ENCODE measurements at regions of chr9 and their contacts with region 1.

Region 1: GRCh38 chr9:124593651-124594058 is 86.5 kb upstream of the NR5A1 start:
- DNase-seq: no peak
- H3K4me3 ChIP-seq: no peak overlapping the region
- H3K4me3 Mint-ChIP-seq: no peak overlapping the region
- H3K27ac Mint-ChIP-seq: no peak overlapping the region
- H3K4me1 ChIP-seq: peaks cover 42% of the 10 kb centered on the region
- H3K4me1 Mint-ChIP-seq: peaks cover 29% of the 10 kb centered on the region
- H3K27me3 ChIP-seq: no peaks in the 10 kb centered on the region
- H3K27me3 Mint-ChIP-seq: no peaks in the 10 kb centered on the region
- CTCF ChIP-seq: no peak

Region 2: DNA sequence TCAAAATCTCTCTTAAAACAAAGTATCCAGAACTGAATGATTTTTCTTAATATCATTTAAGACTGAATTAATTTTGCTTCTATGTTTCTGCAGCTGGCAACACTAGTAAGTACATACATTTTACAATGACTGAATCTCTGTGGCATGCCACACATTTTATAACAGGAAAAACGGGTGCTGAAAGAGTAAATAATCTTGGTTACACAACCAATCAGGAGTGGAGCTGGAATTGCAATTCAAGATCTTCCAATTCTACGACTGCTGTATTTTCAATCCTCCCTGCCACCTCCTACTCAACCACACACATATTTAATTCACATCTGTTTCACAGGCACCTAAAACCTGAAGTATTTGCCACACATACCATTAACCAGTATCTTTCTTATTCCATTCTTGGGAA is 33.8 kb before region 1 on chr9:
- CTCF ChIA-PET with region 1: no interaction called
- POLR2A ChIA-PET with region 1: interaction called, 4 read pairs
- intact Hi-C with region 1: loop called (anchors 5 kb)
- DNase-seq: peak in 1 of 2 experiments; percentile 32
- H3K4me3 ChIP-seq: no peak overlapping the region
- H3K4me3 Mint-ChIP-seq: no peak overlapping the region
- H3K27ac Mint-ChIP-seq: peak overlapping the region; percentile 37
- H3K4me1 ChIP-seq: peaks cover 37% of the 10 kb centered on the region
- H3K4me1 Mint-ChIP-seq: peaks cover 22% of the 10 kb centered on the region
- H3K27me3 ChIP-seq: no peaks in the 10 kb centered on the region
- H3K27me3 Mint-ChIP-seq: no peaks in the 10 kb centered on the region
- CTCF ChIP-seq: no peak

Region 3: DNA sequence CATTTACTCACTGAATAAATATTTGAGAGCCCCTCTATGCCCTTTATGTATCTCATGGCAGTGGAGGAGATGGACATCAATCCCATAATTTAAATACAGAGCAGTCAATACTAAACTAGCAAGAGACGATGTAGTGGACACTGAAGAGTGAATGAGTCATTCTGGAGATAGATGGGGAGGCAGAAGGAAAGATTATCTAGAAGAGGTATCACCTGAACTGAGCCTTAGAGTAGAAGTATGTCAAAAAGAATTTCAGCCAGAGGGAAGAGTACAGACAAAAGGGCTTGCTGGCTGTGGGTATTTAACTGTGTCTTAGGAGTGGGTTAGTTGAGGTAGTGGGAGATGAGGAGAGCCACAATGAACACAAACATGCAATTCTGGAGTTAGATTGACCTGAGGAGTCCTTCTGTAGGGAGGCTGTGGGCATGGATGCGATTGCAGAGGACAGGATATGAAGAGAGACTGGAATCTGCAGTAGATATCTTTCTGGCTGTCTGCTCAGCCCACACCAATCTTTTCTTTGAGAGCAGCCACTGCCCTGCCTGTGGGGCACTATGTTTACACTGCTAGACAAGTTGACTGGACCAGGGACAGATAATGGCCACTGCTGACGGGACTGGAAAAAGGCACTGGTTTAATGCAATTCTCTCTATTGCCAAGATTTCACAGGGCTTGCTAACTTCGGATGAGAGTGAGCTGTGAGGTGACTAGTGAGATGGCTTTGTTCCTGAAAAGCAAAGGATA is 22.5 kb before region 1 on chr9:
- CTCF ChIA-PET with region 1: no interaction called
- POLR2A ChIA-PET with region 1: no interaction called
- intact Hi-C with region 1: loop called (anchors 2 kb)
- DNase-seq: no peak
- H3K4me3 ChIP-seq: no peak overlapping the region
- H3K4me3 Mint-ChIP-seq: peak overlapping the region; percentile 1
- H3K27ac Mint-ChIP-seq: peak overlapping the region; percentile 33
- H3K4me1 ChIP-seq: peaks cover 40% of the 10 kb centered on the region
- H3K4me1 Mint-ChIP-seq: peaks cover 46% of the 10 kb centered on the region
- H3K27me3 ChIP-seq: no peaks in the 10 kb centered on the region
- H3K27me3 Mint-ChIP-seq: no peaks in the 10 kb centered on the region
- CTCF ChIP-seq: no peak

Region 4: DNA sequence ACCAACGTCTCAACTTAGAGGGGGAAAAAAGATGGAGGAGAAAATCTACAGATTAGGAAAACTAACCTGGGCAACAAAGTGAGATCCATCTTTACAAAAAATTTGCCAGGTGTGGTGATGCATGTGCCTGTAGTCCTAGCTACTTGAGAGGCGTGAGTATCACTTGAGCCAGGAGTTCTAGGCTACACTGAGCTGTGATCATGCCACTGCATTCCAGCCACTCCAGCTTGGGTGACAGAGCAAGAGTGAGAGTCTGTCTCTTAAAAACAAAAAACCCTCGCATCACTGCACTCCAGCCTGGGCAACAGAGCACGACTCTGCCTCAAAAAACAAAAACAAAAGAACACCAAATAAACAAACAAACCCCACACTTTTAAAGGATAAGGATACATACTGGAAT is 11.6 kb after region 1 on chr9:
- CTCF ChIA-PET with region 1: no interaction called
- POLR2A ChIA-PET with region 1: no interaction called
- intact Hi-C with region 1: no loop called
- DNase-seq: no peak
- H3K4me3 ChIP-seq: no peak overlapping the region
- H3K4me3 Mint-ChIP-seq: no peak overlapping the region
- H3K27ac Mint-ChIP-seq: no peak overlapping the region
- H3K4me1 ChIP-seq: no peaks in the 10 kb centered on the region
- H3K4me1 Mint-ChIP-seq: no peaks in the 10 kb centered on the region
- H3K27me3 ChIP-seq: no peaks in the 10 kb centered on the region
- H3K27me3 Mint-ChIP-seq: no peaks in the 10 kb centered on the region
- CTCF ChIP-seq: no peak

Region 5: DNA sequence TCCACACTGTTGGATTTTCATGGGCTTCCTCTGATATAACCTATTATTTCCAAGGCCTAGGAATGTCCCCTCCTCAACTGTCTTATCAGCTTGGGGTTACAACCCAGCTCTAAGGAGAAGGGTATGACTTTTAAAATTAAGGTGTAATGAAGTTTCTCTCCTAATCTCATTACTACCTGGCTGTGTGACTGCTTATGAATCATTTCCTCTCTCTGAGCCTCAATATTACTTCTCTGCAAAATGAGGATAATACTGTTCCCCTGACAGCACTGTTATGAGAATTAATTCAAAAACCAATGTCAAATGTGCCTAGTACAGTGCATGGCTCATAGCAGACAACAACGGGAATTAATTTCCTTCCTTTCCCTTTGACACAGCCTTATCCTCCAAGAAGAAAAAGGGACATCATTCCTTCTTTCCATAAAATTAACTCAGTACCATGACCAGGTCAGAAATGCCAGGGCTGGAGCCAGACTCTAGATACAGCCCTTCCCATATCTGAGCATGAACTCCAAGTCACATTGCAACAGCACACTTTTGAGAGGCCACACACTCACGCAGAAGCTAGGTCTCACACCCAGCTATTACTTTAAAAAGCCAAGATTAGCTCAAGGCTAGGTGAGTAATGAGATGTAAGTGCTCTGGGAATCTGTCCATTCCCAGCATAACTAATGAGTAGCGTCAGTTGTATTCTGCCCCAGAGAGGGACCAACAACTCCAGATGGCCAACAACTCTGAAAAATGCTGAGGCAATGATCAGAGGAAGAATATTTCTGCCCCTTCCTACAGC is 58.7 kb after region 1 on chr9:
- CTCF ChIA-PET with region 1: no interaction called
- POLR2A ChIA-PET with region 1: no interaction called
- intact Hi-C with region 1: no loop called
- DNase-seq: no peak
- H3K4me3 ChIP-seq: no peak overlapping the region
- H3K4me3 Mint-ChIP-seq: no peak overlapping the region
- H3K27ac Mint-ChIP-seq: no peak overlapping the region
- H3K4me1 ChIP-seq: peaks cover 2% of the 10 kb centered on the region; the same call in 1 of the 2 replicates
- H3K4me1 Mint-ChIP-seq: no peaks in the 10 kb centered on the region
- H3K27me3 ChIP-seq: no peaks in the 10 kb centered on the region
- H3K27me3 Mint-ChIP-seq: no peaks in the 10 kb centered on the region
- CTCF ChIP-seq: no peak

Measured in Caco-2 (cell line).